Activated naive CD4-positive, alpha-beta T cell treated with anti-CD3 and anti-CD28 coated beads, Interleukin-2, amount 10 ng/mL, durations not matched to agents 7 days and 5 days (primary cell): ENCODE measurements at regions of chr12 and their contacts with region 1.

Region 1: DNA sequence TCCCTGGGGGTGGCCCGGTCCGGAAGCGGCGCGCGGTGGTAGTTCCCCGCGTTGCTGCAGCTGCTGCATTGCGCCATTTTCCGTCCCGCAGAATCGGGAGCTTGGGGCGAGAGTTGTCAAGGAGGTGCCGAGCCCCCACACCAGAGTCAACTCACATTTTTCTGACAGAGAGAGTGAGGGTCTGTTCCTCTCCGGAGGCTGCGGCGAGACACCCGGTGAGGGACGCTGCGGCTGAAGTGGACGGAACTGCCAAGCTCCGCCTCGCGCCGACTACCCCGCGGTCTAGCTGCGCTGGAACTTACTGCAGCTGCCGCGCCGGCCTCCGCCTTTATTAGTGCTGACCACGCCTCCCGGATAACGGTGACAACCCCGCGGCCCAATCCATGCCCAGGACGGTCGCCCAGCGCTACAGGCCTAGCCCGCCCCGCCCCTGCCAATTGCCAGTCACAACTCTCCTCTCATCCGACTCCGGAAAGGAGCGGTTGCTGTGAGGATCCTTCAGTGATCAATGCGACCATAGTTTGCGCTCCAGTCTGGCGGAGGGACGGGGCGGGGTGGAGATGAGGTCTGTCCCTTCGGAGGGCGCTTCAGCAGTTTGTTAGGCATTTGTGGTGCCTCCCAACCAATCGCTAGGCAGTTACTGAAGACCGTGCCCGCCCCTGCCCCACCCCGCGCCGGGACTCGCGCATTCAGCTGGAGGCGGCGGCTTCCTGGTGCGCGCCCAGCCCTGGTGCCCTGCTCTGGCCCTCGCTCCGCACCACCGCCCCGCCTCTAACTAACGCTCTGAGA is at the start of gene VAMP1:
- DNase-seq: peak; percentile 100
- H3K4me3 Mint-ChIP-seq: peak within 1 kb of the TSS; percentile 94
- H3K27ac Mint-ChIP-seq: peak within 1 kb of the TSS; percentile 93
- H3K4me1 Mint-ChIP-seq: peaks cover 56% of the 10 kb centered on the region
- H3K27me3 Mint-ChIP-seq: peaks cover 24% of the 10 kb centered on the region

Region 2: DNA sequence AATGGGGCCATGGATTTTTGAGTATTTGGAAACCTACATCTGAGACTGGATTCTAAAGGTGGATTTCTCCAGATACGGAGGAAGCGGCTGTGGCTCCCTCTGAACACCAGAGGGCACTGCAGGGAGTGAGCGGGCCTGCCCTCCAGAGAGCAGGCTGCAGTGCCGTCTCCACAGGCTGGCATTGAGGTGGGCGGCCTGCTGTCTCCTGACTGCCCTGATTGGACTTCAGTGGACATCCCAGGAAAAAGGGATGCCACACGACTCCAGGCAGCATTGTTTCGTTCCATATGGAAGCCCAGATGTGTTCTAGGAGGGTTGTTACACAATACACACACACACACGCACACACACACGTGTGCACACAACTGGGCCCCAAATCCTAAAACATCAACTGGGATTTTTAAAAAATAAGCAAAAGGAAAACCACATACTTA is 504.6 kb before region 1 on chr12:
- CTCF ChIA-PET with region 1: no interaction called
- DNase-seq: peak; percentile 61
- H3K4me3 Mint-ChIP-seq: no peak overlapping the region
- H3K27ac Mint-ChIP-seq: no peak overlapping the region
- H3K4me1 Mint-ChIP-seq: no peaks in the 10 kb centered on the region
- H3K27me3 Mint-ChIP-seq: peaks cover 29% of the 10 kb centered on the region

Region 3: DNA sequence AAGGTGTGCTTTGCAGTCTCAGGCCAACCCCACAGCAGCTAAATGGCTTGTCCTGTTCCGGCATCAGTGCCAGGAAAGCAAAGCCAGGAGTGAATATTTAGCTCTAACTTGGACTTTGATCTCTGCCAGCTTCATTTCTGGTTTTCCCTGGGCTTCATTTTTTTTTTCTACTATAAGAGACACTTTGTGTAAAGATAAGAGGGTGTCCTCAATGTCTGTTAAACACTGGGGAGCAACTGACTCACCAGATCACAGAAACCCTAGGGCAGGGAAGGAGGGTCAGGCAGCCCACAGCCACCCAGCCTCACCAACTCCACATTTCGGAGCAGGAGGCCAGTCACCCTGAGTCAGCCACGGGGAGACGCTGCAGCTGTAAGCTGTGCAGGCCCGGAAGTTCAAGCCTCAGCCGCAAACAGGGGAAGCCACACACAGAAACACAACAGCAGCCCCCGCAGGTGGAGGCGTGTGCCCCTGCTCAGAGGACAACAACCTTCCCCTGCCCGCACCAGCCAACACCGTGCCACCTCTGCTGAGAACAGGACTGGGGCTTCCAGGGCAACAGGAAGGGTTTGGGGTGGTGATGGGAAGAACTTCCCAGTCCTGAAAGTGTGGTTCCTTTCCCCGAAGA is 135.0 kb before region 1 on chr12:
- CTCF ChIA-PET with region 1: interaction called, 33 read pairs
- DNase-seq: peak; percentile 91
- H3K4me3 Mint-ChIP-seq: no peak overlapping the region
- H3K27ac Mint-ChIP-seq: no peak overlapping the region
- H3K4me1 Mint-ChIP-seq: peaks cover 4% of the 10 kb centered on the region
- H3K27me3 Mint-ChIP-seq: no peaks in the 10 kb centered on the region

Region 4: DNA sequence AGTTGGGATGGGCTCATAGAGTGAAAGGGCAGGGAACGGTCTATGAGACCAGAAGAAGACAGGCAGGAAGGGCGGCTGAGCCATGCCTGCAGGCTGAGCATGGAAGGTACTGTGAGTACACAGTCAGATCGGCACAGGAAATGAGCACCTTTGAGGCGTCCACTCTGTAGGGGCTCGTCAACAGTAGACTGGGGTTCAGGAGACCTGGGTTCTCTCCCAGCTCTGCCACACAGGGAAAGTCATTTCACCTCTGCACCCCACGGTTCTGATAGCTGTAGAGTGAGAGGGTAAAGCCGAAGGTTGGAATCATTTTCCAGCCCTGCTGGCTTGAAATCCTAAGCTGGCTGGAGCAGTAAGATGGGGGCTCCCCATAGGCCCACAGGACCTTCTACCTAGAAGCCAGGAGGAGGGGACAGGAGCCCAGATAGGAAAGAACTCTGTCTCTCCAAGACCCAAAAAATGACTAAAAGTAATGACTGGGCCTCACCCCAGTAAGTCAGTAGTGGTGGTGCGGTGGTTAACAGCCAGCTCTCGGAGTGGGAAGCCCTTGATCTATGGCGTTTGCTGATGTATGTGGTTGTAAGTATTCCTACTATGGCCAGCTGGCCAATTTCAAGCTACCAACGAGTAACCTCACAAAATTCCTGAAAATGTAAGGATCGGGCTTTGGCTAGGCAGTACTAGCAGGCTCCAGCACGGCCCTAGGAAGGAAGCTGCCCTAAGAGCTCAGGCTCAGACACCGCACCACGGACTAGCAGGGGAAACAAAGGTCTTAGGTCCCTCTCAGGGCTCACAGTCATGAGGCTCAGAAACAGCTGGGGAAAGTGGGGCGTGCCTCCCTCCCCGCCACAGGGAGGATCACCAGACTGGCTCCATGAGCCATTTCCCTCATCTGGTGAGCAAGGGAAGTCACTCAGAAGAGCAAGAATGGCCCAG is 36.1 kb before region 1 on chr12:
- CTCF ChIA-PET with region 1: interaction called, 17 read pairs
- DNase-seq: peak; percentile 65
- H3K4me3 Mint-ChIP-seq: no peak overlapping the region
- H3K27ac Mint-ChIP-seq: peak overlapping the region; percentile 87
- H3K4me1 Mint-ChIP-seq: peaks cover 59% of the 10 kb centered on the region
- H3K27me3 Mint-ChIP-seq: no peaks in the 10 kb centered on the region

Region 5: GRCh38 chr12:6451348-6452244 is 19.0 kb before region 1 on chr12 and contains the start of gene TAPBPL:
- CTCF ChIA-PET with region 1: interaction called, 63 read pairs
- DNase-seq: peak; percentile 90
- H3K4me3 Mint-ChIP-seq: peak within 1 kb of the TSS; percentile 99
- H3K27ac Mint-ChIP-seq: peak within 1 kb of the TSS; percentile 99
- H3K4me1 Mint-ChIP-seq: peaks cover 82% of the 10 kb centered on the region
- H3K27me3 Mint-ChIP-seq: no peaks in the 10 kb centered on the region

Region 6: DNA sequence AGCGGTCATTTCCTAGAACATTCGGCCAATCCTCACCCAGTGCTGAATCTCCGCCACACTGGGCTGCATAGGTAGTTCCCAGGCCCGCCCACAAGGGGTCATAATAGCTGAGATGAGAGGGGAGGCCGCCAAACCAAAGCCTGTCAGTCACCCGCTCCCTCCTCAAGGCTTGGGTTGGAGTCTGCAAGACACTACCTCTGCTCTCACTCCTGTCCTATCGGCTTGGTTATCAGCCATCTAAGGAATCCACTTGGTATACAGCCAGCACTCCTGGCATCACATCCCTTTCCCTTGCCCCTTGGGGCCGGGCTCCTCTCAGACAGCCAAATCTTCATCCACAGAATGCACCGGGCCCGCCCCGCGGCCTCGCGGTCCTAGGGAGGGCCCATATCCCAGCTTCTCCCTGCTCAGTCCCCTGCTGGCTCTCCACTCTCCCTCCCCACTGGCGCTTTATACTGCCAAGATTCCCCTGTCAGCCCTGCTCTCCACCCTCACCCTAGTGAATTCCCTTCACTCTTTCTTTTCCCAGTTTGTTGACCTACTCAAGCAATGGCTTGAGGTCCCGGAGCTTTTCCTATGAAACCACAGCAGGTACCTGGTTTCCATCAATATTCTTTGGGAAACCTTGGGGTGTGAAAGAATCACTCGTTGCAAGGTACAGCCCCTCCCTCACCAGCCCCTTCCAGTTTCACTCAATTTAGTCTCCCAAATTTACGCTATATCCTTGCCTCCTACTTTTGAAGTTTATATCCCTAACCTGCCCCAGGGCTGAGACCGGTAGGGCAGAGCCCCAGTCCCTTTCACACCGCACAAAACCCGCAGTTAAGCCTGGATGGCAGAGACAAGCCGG is 83.8 kb after region 1 on chr12:
- CTCF ChIA-PET with region 1: interaction called, 11 read pairs
- DNase-seq: peak; percentile 84
- H3K4me3 Mint-ChIP-seq: peak overlapping the region; percentile 89
- H3K27ac Mint-ChIP-seq: peak overlapping the region; percentile 29
- H3K4me1 Mint-ChIP-seq: peaks cover 60% of the 10 kb centered on the region
- H3K27me3 Mint-ChIP-seq: no peaks in the 10 kb centered on the region